ENCODE measurements at regions of chr15 and their contacts with region 1.

Region 1: GRCh38 chr15:26082221-26083109 is 219.3 kb upstream of the ATP10A start:
- DNase-seq: peak; percentile 97 to 99
- ATAC-seq: peak; percentile 99
- H3K4me3 ChIP-seq: peak overlapping the region; percentile 88 to 94
- H3K27ac ChIP-seq: peak overlapping the region; percentile 84 to 91
- H3K4me1 ChIP-seq: no peaks in the 10 kb centered on the region
- H3K27me3 ChIP-seq: no peaks in the 10 kb centered on the region

Region 2: GRCh38 chr15:26051761-26052675 is 30.4 kb before region 1 on chr15:
- intact Hi-C with region 1: loop called in 1 of 2 experiments (anchors 1 kb)
- DNase-seq: peak; percentile 87 to 89
- ATAC-seq: peak; percentile 91
- H3K4me3 ChIP-seq: peak overlapping the region in 1 of 2 donors; percentile 4
- H3K27ac ChIP-seq: peak overlapping the region in 1 of 2 donors; percentile 37
- H3K4me1 ChIP-seq: no peaks in the 10 kb centered on the region
- H3K27me3 ChIP-seq: no peaks in the 10 kb centered on the region

Measured in aorta (tissue), 5 donors.